ENCODE measurements at regions of chr6 and their contacts with region 1.

Region 1: DNA sequence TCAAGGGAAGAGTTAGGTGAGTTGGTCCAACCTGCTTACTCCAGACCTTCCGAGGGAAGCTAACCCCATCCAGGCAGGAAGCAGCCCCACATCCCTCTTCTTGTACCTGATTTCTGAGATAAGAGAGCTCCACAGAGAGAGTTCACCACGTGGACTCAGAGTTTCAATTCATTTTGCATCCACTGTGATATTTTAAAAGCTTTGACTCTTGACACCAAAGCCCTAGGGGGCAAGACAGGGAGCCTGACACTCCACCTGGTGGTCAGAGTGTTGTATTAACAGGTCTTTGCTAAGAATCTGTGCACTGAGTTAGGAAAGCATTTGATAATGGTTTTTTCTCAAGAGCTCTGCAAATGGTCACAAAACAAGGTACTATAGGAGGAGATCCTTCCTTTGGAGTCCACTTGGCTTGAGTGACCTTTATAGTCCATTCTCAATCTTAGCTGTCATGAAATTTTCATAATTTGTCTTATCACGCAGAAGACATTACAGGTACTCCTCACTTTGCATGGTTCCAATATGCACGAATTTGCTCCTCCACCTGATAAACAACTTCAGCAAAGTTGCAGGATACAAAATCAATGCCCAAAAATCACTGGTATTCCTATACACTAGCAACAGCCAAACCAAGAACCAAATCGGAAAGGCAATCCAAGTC is 56.2 kb upstream of the RIPOR2 start:
- DNase-seq: peak; percentile 62
- ATAC-seq: peak; percentile 97
- H3K4me3 ChIP-seq: no peak overlapping the region
- H3K27ac ChIP-seq: no peak overlapping the region
- H3K4me1 ChIP-seq: no peaks in the 10 kb centered on the region
- H3K27me3 ChIP-seq: no peaks in the 10 kb centered on the region
- CTCF ChIP-seq: peak; percentile 82
- EP300 ChIP-seq: no peak
- POLR2A ChIP-seq: no peak
- RAD21 ChIP-seq: peak; percentile 76

Region 2: DNA sequence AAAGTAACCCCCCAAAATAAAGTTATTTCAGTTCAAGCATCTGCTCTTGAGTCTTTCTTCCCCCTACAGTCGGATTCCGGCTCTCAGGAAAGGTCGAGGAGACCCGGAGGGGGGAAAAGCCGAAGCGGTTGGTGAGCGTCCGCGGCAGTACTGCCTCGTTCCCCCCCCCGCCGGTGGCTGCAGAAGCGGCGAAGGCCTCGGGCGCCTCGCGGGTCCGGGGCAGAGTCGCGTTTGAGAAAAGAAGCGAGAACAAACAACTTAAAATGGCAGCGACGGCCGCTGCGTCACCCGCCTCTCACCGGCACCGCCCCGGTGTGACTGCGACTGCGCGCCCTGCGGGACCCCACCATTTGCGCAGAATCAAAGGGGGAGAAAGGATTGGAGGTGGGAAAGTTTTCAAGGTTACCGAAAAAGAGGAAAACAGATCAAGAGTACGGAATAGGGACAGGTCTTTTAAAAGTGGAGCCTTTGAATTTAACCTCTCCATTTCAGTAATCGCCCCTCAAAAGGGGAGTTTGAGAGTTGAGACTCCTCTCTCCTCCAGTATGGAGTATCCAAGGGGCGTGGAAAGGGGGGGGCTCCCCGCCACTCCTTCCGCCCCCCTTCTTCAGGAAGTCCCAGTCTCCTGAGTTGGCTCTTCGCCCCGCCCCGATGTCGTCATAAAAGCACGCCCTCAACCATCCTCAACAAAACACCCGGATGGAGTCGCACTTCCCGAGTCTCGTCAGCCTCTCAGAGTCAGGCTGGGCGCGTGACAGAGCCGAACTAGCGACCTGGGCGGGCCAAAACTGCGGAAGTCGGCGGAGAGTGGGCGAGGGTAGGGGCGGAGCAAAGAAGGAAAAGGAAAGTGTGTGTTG is 271.1 kb before region 1 on chr6:
- CTCF ChIA-PET with region 1: no interaction called
- POLR2A ChIA-PET with region 1: no interaction called
- in situ Hi-C with region 1: no loop called
- intact Hi-C with region 1: no loop called
- DNase-seq: peak; percentile 100
- ATAC-seq: peak; percentile 96
- H3K4me3 ChIP-seq: peak overlapping the region; percentile 90 to 99 (median 97)
- H3K27ac ChIP-seq: peak overlapping the region; percentile 94
- H3K4me1 ChIP-seq: peaks cover 34% of the 10 kb centered on the region
- H3K27me3 ChIP-seq: no peaks in the 10 kb centered on the region; a peak in 1 of 5 replicates
- CTCF ChIP-seq: peak; percentile 30
- EP300 ChIP-seq: peak; percentile 34 to 59; a peak in 3 of 4 replicates
- POLR2A ChIP-seq: peak; percentile 98
- RAD21 ChIP-seq: peak; percentile 52

Region 3: GRCh38 chr6:24855395-24856245 is 136.3 kb before region 1 on chr6:
- CTCF ChIA-PET with region 1: interaction called, 41 read pairs
- POLR2A ChIA-PET with region 1: interaction called, 3 read pairs
- in situ Hi-C with region 1: loop called (anchors 5 kb)
- intact Hi-C with region 1: loop called (anchors 1 kb)
- DNase-seq: peak; percentile 60
- ATAC-seq: peak; percentile 89
- H3K4me3 ChIP-seq: no peak overlapping the region
- H3K27ac ChIP-seq: no peak overlapping the region
- H3K4me1 ChIP-seq: peaks cover 5% of the 10 kb centered on the region; the same call in 1 of the 2 replicates
- H3K27me3 ChIP-seq: peaks cover 0 to 13% of the 10 kb centered on the region in 2 experiments; a peak in 3 of 5 replicates
- CTCF ChIP-seq: peak; percentile 87
- EP300 ChIP-seq: no peak
- POLR2A ChIP-seq: no peak
- RAD21 ChIP-seq: peak; percentile 71

Region 4: DNA sequence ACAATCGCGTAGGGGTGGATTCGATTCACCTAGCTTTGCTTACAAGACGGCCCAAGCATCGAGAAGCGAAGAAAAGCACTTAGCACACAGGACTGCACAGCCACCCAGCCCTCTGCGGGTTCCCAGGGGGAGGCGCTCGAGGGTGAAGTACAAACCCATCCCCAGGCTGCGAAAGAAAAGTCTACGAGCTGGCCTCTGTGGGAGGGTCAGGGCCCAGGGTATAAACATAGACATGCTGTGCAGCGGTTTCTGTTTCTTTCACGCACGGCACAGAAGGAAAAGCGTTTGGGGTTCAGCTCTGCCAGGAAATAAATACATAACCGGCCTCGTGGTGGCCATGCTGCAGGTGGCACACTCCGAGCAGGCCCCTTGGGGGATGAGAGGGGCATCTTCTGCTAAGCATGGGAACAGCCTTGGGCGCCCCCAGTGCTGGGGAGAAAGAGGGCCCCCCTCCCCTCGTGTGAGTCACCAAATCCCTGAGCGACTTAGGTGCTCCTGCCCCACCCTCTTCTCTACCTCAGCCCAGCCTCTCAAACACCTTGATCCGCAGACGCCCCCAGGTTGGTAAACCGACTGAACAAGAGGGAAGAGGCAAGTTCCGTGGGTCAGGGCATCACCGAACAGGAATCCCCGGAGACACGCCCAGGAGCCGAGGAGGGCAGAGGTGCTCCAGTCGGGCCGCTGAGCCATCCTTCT is 35.4 kb after region 1 on chr6:
- CTCF ChIA-PET with region 1: no interaction called
- POLR2A ChIA-PET with region 1: no interaction called
- in situ Hi-C with region 1: no loop called
- intact Hi-C with region 1: no loop called
- DNase-seq: no peak
- ATAC-seq: no peak; the same call in 2 of the 3 replicates
- H3K4me3 ChIP-seq: no peak overlapping the region
- H3K27ac ChIP-seq: no peak overlapping the region
- H3K4me1 ChIP-seq: no peaks in the 10 kb centered on the region
- H3K27me3 ChIP-seq: no peaks in the 10 kb centered on the region
- CTCF ChIP-seq: 0 out of 2 replicates have a peak, but pooled peaks have one; percentile 9
- EP300 ChIP-seq: no peak
- POLR2A ChIP-seq: no peak
- RAD21 ChIP-seq: no peak